Dorsolateral prefrontal cortex (tissue), 120 donors: ENCODE measurements at regions of chr11 and their contacts with region 1.

Region 1: DNA sequence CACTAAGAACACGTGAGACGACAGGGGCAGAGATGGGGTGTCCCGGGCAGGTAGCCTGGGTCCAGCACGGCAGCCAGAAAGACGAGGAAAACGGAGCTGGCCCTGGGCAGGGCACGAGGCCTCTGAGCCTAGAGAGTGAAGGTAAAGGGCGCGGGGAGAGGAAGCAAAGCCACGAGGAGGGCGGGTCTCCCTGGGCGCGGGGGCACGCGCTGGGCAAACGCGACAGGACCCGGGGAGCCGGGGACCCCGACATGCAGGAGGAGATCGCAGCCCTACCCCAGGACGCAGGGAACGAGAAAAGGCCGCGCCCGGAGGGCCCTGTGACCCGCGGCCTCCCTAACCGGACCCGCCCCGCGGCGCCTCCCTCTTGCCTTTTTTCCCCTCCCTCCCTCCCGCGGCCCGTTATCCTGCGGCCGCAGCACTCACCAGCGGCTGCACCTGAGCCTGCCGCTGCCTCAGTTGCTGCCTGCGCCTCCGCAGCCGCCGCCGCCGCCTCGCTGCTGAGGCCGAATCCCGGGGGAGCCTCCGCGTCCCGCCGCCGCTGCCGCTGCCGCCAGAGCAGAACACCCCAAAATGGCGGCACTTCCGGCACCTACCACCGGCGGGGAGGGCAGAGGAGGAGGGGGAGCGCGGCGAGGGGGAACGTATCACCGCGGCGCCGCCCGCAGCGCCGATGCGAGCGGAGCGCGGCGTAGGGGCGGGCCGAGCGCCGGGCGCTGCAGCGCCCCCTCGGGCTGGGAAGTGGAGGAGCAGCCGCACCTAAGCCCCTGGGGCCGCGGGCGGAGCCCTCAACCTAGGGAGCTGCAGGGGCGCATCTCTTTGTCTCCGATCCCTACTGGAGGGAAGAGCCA is at the start of gene CELF1:
- DNase-seq: peak; percentile 83 to 92 (median 86)
- H3K4me3 ChIP-seq: peak within 1 kb of the TSS; percentile 70 to 100 (median 94)
- H3K27ac ChIP-seq: peak within 1 kb of the TSS; percentile 58 to 98 (median 92)
- H3K27me3 ChIP-seq: no peaks in the 10 kb centered on the region
- CTCF ChIP-seq: peak; percentile 73 to 99 (median 93)
- total RNA-seq, gene CELF1: 79.5 to 194 (median 131) TPM

Region 2: GRCh38 chr11:47426061-47426956 is 126.5 kb before region 1 on chr11 and contains the start of gene PSMC3:
- intact Hi-C with region 1: loop called (anchors 1 to 10 kb)
- DNase-seq: peak; percentile 97 to 99 (median 98)
- H3K4me3 ChIP-seq: peak within 1 kb of the TSS; percentile 57 to 100 (median 93)
- H3K27ac ChIP-seq: peak within 1 kb of the TSS; percentile 68 to 99 (median 94)
- H3K27me3 ChIP-seq: no peaks in the 10 kb centered on the region
- CTCF ChIP-seq: peak in 27 of 56 donors; percentile 8 to 63 (median 25)
- total RNA-seq, gene PSMC3: 65.6 to 166 (median 113) TPM

Region 3: DNA sequence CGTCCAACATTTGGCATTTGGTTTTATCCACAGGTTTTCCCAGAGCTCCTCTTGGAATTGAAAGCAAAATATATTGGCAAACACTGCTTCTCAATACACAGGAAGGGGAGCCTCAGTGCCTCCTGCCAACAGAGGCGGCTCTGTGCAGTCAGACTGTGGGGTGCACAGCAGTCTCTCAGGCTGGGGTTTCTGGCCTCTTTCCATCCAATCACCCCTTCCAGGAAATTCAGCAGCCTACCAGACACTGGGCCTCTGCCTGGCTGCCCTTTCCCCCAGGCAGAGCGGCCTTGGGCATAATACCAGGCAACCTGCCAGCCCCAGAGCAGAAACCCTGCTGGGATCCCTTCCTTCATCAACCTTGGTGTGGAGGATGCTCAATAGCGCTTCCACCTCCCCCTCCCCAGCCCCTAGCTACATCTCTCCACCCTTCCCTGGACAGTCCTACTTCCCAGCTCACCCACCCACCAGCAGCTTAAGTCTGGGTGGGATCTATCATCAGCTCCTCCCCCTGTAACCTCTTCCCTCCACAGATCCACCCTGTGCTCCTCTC is 86.0 kb before region 1 on chr11:
- intact Hi-C with region 1: loop called (anchors 5 to 10 kb)
- DNase-seq: peak; percentile 51 to 79 (median 76)
- H3K4me3 ChIP-seq: peak overlapping the region in 26 of 59 donors; percentile 1 to 32 (median 20)
- H3K27ac ChIP-seq: peak overlapping the region in 58 of 59 donors; percentile 54 to 90 (median 80)
- H3K27me3 ChIP-seq: no peaks in the 10 kb centered on the region
- CTCF ChIP-seq: peak in 7 of 56 donors; percentile 9 to 35 (median 22)

Region 4: GRCh38 chr11:47477323-47477722 is 75.5 kb before region 1 on chr11:
- intact Hi-C with region 1: loop called in 1 of 2 experiments (anchors 10 kb)
- DNase-seq: no peak
- H3K4me3 ChIP-seq: no peak overlapping the region
- H3K27ac ChIP-seq: peak overlapping the region in 57 of 59 donors; percentile 17 to 87 (median 66)
- H3K27me3 ChIP-seq: no peaks in the 10 kb centered on the region
- CTCF ChIP-seq: no peak

Region 5: DNA sequence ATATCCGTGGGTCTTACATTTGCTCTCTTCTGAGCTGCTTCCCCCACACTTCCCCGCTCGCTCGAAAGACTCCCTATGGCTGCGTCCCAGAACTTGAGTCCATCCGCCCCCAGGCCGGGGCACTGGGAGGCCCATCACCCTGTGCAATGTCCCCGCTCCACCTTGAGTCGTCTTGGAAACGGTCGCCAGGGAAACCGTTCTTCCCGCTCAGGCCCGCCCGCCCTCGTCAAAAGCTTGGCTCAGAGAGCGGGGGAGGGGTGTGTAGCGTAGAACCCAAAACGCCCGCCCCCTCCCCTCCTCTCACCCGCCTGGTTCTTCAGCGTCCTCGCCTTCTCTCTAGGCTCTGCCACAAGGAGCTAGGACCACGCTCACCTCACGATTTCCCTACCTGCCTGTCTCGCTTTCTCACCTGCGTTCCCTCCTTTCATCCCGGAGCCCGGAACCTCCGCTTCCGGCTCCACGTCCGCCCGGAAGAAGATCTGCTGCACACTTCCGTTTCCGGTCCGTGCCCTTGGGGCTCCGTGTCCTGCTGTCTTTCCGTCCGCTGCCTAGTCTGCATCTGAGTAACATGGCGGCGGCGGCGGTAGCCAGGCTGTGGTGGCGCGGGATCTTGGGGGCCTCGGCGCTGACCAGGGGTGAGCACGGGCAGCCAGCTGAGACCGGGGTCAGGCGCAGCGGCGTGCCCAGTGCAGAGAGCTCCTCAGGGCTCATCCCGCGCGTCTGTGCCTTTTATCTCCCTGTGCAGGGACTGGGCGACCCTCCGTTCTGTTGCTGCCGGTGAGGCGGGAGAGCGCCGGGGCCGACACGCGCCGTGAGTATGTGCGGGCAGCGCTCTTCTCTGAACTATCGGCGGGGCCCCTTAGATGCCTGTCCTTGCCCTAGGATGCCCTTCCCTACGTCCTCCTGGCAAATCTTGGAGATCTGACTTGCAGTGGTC is 26.0 kb after region 1 on chr11 and contains the starts of genes KBTBD4 and NDUFS3:
- intact Hi-C with region 1: loop called in 1 of 2 experiments (anchors 2 kb)
- DNase-seq: peak; percentile 76 to 93 (median 91)
- H3K4me3 ChIP-seq: peak within 1 kb of the TSS; percentile 77 to 100 (median 94)
- H3K27ac ChIP-seq: peak within 1 kb of the TSS; percentile 65 to 98 (median 92)
- H3K27me3 ChIP-seq: no peaks in the 10 kb centered on the region
- CTCF ChIP-seq: peak in 28 of 56 donors; percentile 10 to 57 (median 28)
- total RNA-seq, gene KBTBD4: 12.8 to 27.9 (median 19.6) TPM
- total RNA-seq, gene NDUFS3: 59.7 to 172 (median 126) TPM

Region 6: GRCh38 chr11:47797633-47798032 is 244.8 kb after region 1 on chr11:
- intact Hi-C with region 1: no loop called
- DNase-seq: no peak
- H3K4me3 ChIP-seq: no peak overlapping the region
- H3K27ac ChIP-seq: no peak overlapping the region
- H3K27me3 ChIP-seq: no peaks in the 10 kb centered on the region
- CTCF ChIP-seq: no peak